Posterior vena cava (tissue), 2 donors: ENCODE measurements at regions of chr1 and their contacts with region 1.

Region 1: DNA sequence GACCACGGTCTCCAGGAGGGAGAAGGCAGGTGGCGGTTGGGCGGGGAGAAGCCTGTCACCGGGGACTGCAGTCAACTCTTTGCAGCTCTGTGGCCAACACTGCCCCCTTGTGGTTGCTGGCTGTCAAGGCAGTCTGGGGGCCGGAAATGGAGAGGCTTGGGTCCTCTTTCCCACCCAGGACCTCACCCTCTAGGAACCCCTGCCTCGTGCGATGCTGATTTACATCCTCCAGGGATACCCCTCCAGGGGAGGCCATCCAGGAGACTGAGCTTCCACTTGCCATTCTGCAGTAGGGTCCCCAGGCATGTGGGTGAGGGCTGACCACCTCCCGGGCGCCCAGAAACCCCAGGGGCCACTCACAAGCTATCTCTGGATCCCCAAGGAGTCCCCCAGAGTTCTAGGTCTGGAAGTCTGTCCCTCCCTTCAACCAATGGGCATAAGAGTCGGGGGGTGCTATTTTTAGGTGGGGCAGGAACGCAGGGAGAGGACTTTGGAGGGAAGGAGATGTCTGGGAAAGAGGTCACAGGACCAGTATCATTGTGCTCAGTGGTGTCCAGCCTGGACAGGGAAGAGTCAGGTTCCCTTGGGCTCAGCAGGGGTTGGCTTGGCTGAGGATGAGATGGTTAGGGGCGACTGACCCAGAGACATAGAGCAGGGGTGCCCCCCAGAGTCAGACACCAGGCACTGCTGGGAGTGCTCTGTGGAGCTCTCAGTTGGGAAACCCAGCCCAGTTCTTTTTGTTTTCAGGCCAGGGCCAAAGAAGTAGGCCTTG is 7.1 kb upstream of the GPR61 start:
- DNase-seq: peak; percentile 94

Region 2: GRCh38 chr1:108541861-108542260 is 990.7 kb before region 1 on chr1:
- intact Hi-C with region 1: no loop called
- DNase-seq: no peak

Region 3: GRCh38 chr1:109263597-109264398 is 268.8 kb before region 1 on chr1:
- intact Hi-C with region 1: loop called (anchors 5 to 10 kb)
- DNase-seq: peak; percentile 94

Region 4: GRCh38 chr1:109483672-109484518 is 48.7 kb before region 1 on chr1 and contains the start of gene ATXN7L2:
- intact Hi-C with region 1: loop called in 1 of 2 experiments (anchors 1 kb)
- DNase-seq: peak; percentile 98
- total RNA-seq, gene ATXN7L2: 2.7 to 3.3 TPM

Region 5: GRCh38 chr1:109490029-109490933 is 42.3 kb before region 1 on chr1:
- intact Hi-C with region 1: loop called in 1 of 2 experiments (anchors 1 kb)
- DNase-seq: no peak

Region 6: GRCh38 chr1:109499661-109500536 is 32.7 kb before region 1 on chr1:
- intact Hi-C with region 1: loop called (anchors 1 to 2 kb)
- DNase-seq: no peak